Psoas muscle (tissue), 8 donors: ENCODE measurements at regions of chr3 and their contacts with region 1.

Region 1: DNA sequence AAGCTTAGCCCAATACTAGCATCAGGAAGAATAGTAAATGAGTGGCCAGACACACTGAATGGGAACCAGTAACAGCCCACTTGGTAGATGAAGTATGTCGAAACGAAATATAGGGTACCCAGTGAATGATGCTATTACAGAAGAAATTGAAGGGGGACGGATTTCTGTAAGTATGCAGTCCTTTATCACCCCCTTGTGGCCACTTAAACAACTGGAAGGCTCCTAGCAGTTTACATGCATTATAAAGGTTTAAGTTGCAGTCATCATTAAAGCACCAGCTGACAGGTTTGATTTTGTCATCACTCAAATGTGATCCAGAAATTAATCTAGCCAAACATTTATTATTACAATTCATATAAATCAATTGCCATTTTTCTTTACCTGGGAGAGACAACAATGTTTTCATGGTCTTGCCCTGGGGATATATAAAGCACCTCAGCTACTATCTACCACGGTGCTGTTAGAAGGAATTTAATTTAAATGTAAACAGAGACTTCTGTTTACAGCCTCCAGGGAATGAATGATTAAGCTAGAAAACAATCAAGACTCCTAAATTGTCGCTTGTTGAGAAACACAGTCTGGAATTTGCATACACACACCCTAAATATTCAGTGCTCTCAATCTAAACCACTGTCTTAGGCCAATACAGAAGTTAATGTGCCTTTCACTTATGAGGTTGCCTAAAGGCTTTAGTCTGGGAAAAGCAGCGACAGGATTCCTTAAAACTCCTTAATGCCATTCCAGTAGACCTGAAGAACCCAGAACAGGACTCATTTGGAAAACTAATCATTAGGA is 7.8 kb downstream of the EIF1B start:
- DNase-seq: no peak
- ATAC-seq: peak; percentile 44 to 73 (median 50)
- H3K4me3 ChIP-seq: no peak overlapping the region
- H3K27ac ChIP-seq: no peak overlapping the region
- H3K4me1 ChIP-seq: peaks cover 17% of the 10 kb centered on the region
- H3K27me3 ChIP-seq: no peaks in the 10 kb centered on the region
- CTCF ChIP-seq: peak; percentile 84

Region 2: DNA sequence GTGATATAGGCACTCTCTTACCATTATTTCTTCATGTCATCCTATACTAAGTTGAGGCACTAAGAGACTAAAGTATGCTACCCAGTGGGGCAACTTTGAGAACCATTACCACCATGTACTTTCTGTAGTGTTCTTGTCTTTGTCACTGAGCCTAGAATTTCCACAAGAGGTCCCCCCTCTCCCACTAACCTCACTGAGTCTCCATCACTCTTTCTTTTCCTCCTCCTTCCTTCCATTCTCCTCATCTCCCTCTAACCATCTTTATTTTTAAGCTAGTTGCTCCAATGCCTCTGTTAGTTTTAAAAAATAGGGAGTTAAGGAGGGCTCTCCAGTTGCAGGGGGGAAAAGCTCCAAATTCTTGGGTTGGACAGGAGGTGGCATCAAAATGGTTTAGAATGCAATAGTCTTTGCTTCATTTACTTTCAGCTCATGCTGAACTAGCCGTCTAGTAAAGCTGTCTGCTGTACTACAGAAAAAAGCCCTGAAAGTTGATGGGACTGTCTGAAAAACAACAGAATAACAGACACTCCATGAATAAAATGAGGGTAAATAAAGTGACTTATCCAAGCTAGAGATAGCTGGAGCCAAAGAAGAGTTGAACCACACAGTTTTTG is 592.9 kb before region 1 on chr3:
- intact Hi-C with region 1: loop called in 1 of 2 experiments (anchors 10 kb)
- DNase-seq: no peak
- ATAC-seq: peak in 1 of 4 donors; percentile 62
- H3K4me3 ChIP-seq: no peak overlapping the region
- H3K27ac ChIP-seq: no peak overlapping the region
- H3K4me1 ChIP-seq: no peaks in the 10 kb centered on the region
- H3K27me3 ChIP-seq: no peaks in the 10 kb centered on the region
- CTCF ChIP-seq: peak; percentile 45

Region 3: GRCh38 chr3:40191850-40192448 is 125.3 kb before region 1 on chr3:
- intact Hi-C with region 1: loop called (anchors 1 to 2 kb)
- DNase-seq: peak in 1 of 2 donors; percentile 40
- ATAC-seq: peak; percentile 63 to 82 (median 78)
- H3K4me3 ChIP-seq: no peak overlapping the region
- H3K27ac ChIP-seq: no peak overlapping the region
- H3K4me1 ChIP-seq: peaks cover 11% of the 10 kb centered on the region
- H3K27me3 ChIP-seq: no peaks in the 10 kb centered on the region
- CTCF ChIP-seq: peak; percentile 99

Region 4: DNA sequence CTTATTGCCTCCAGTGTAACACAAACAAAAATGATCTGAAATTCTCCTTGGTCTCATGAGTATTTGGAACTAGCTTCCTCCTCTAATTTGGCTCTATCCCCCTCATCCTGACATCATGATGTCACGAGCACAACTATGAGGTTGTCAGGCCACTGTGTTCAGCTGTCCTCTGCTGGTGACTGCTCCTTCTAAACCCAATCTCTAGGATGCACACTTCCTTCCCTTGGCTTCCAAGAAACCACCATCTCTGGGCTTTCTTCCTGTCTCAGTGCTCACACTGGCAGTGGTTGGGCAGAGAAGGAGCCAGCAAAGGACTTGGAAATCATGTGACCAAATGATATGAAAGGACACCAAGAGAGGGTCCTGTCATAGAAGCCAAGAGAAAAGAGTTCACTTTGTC is 38.5 kb before region 1 on chr3:
- intact Hi-C with region 1: no loop called
- DNase-seq: no peak
- ATAC-seq: no peak
- H3K4me3 ChIP-seq: no peak overlapping the region
- H3K27ac ChIP-seq: no peak overlapping the region
- H3K4me1 ChIP-seq: no peaks in the 10 kb centered on the region
- H3K27me3 ChIP-seq: no peaks in the 10 kb centered on the region
- CTCF ChIP-seq: no peak

Region 5: DNA sequence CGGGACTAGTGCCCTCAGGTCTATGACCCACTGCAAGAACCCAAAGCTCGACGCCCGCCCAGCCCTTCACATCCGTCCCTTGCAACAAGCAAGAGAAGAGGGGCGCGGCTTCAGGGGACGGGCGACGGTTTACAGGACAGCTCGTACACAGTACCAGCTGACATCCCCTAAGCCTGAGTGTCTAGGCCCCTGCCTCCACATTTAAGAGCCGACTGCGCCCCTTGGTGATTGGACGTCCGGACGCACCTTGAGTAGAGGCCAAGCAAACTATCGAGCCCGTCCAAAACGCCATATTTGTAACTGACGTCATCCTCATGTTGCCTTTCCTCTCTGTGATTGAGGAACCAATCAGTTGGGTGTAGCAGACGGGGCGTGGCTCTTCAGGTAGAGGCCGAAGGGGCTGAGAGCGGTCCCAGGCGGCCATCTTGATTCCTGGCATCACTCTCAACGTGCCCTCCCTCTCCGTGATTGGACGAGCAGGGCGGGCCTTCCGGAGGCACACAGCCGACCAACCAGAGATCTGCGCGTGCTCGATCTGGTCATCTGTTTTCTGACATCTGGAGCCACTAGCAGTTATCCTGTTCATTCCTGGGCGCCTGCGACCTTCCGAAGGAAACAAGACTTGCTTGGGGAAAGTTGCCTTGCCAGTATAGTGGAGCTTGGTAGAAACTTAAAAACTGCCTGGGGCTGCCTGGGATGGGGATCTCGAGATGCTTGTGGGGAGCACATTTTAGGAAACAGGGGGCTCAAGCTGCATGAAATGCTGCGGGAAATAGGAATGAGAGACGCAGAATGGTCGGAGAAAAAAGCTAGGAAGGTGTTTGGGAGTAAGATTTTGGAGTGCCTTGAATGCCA is 135.8 kb after region 1 on chr3:
- intact Hi-C with region 1: loop called (anchors 5 kb)
- DNase-seq: peak; percentile 97 to 99
- ATAC-seq: peak; percentile 94 to 97 (median 96)
- H3K4me3 ChIP-seq: peak overlapping the region; percentile 77
- H3K27ac ChIP-seq: peak overlapping the region; percentile 94
- H3K4me1 ChIP-seq: peaks cover 24% of the 10 kb centered on the region
- H3K27me3 ChIP-seq: no peaks in the 10 kb centered on the region
- CTCF ChIP-seq: no peak

Region 6: GRCh38 chr3:40524568-40525285 is 207.5 kb after region 1 on chr3 and contains the start of gene ZNF621:
- intact Hi-C with region 1: loop called in 1 of 2 experiments (anchors 10 kb)
- DNase-seq: peak; percentile 93 to 96
- ATAC-seq: peak; percentile 99 to 100 (median 100)
- H3K4me3 ChIP-seq: peak within 1 kb of the TSS; percentile 91
- H3K27ac ChIP-seq: peak within 1 kb of the TSS; percentile 92
- H3K4me1 ChIP-seq: peaks cover 3% of the 10 kb centered on the region
- H3K27me3 ChIP-seq: no peaks in the 10 kb centered on the region
- CTCF ChIP-seq: no peak
- total RNA-seq, gene ZNF621: 8.8 to 9.8 (median 9.1) TPM

Region 7: DNA sequence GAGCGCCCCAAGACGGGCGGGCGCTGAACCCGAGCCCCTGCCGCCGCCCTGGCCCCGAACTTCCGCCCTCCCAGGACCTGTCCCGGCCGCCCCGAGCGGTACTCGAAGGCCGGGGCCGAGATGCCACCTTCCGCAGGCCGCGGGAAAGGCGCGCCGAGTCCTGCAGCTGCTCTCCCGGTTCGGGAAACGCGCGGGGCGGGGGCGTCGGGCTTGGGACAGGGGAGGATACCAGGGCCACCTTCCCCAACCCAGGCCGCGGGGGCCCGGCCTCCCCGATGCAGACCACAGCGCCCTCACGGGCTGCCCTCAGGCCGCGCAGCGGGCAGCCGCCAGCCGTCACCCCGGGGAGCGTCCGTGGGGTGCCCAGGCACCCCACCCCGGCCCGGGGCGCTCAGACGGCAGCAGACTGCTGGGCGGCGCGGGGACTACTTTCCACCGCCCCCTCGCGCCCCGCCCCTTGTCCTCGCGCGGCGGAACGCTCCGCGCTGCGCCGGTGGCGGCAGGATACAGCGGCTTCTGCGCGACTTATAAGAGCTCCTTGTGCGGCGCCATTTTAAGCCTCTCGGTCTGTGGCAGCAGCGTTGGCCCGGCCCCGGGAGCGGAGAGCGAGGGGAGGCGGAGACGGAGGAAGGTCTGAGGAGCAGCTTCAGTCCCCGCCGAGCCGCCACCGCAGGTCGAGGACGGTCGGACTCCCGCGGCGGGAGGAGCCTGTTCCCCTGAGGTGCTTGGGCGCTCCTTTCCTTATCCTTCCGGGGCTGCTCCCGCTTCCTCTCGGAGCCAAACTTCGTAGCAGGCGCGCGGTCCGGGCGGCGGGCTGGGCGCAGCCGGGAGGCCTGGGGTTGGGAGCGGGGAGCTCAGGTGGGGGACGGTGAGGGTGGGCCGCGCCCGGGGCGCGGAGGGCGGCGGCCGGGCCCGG is 882.0 kb after region 1 on chr3 and contains the start of gene CTNNB1:
- intact Hi-C with region 1: loop called in 1 of 2 experiments (anchors 10 kb)
- DNase-seq: peak; percentile 94 to 96
- ATAC-seq: peak; percentile 93 to 97 (median 94)
- H3K4me3 ChIP-seq: peak within 1 kb of the TSS; percentile 97
- H3K27ac ChIP-seq: peak within 1 kb of the TSS; percentile 98
- H3K4me1 ChIP-seq: peaks cover 33% of the 10 kb centered on the region
- H3K27me3 ChIP-seq: no peaks in the 10 kb centered on the region
- CTCF ChIP-seq: peak; percentile 13
- total RNA-seq, gene CTNNB1: 93.8 to 128 (median 113) TPM